Posterior cingulate gyrus (tissue), 11 donors: ENCODE measurements at regions of chr5 and their contacts with region 1.

Region 1: GRCh38 chr5:154087257-154087656 is 48.5 kb downstream of the MFAP3 start:
- DNase-seq: peak in 3 of 10 donors; percentile 13 to 25 (median 20)

Region 2: GRCh38 chr5:153926201-153926600 is 161.1 kb before region 1 on chr5:
- intact Hi-C with region 1: no loop called
- DNase-seq: no peak

Region 3: GRCh38 chr5:153981905-153982605 is 105.2 kb before region 1 on chr5:
- intact Hi-C with region 1: loop called (anchors 10 kb)
- DNase-seq: no peak

Region 4: GRCh38 chr5:154031937-154032489 is 55.2 kb before region 1 on chr5:
- intact Hi-C with region 1: no loop called
- DNase-seq: no peak